ENCODE measurements at regions of chr1 and their contacts with region 1.

Region 1: DNA sequence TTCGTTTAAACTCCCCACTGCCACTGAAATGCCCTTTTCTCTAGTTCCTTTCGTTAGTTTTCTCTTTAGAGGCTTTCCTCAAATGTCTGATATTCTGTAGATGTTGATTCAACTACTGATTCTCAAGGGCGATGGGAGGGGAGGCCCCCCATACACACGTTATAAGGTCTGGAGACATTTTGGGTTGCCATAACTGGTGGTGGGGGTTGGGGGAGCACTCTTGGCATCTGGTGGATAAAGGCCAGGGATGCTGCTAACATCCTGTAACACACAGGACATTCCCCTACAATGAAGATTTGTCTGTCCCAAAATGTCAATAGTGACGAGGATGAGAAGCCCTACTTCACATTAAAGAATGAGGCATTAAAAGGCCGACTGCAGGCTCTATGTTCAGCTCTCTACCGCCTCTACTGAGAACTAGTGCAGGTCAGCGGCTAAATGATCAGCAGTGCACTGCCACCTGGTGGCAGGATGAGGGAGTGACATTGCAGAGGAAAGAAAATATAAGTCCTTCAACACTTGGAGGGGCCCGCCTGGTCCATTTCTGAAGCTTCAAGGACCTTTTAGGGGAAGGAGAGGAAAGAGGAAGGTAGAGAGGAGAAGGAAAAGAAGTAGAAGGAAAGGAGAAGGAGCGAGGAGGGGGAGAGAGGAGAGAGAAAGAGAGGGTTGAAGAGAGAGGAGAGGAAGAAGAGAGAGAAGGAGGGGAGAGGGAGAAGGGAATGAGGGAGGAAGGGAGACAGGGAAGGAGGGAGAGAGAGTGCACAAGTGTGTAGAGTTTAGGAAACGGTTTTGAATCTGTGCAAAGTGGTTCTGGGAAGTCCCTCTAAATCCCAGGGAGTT is 29.4 kb downstream of the ALG14 start:
- DNase-seq: no peak
- H3K4me3 ChIP-seq: no peak overlapping the region
- H3K27ac ChIP-seq: peak overlapping the region in 3 of 4 donors; percentile 51 to 75 (median 74)
- H3K4me1 ChIP-seq: peaks cover 0 to 47% (median 3%) of the 10 kb centered on the region in 3 donors
- H3K27me3 ChIP-seq: no peaks in the 10 kb centered on the region
- CTCF ChIP-seq: peak; percentile 90 to 99 (median 99)
- POLR2A ChIP-seq: no peak

Region 2: GRCh38 chr1:94819941-94820746 is 223.2 kb before region 1 on chr1 and contains the start of gene SLC44A3:
- intact Hi-C with region 1: loop called (anchors 10 kb)
- DNase-seq: no peak
- H3K4me3 ChIP-seq: peak within 1 kb of the TSS; percentile 73 to 82 (median 79)
- H3K27ac ChIP-seq: peak within 1 kb of the TSS; percentile 29 to 84 (median 68)
- H3K4me1 ChIP-seq: peaks cover 0 to 38% (median 5%) of the 10 kb centered on the region in 3 donors
- H3K27me3 ChIP-seq: peaks cover 0 to 18% (median 0%) of the 10 kb centered on the region in 4 donors
- CTCF ChIP-seq: peak in 2 of 6 experiments; percentile 19 to 39
- POLR2A ChIP-seq: no peak
- total RNA-seq, gene SLC44A3: 5.4 to 11.7 (median 9.4) TPM

Region 3: DNA sequence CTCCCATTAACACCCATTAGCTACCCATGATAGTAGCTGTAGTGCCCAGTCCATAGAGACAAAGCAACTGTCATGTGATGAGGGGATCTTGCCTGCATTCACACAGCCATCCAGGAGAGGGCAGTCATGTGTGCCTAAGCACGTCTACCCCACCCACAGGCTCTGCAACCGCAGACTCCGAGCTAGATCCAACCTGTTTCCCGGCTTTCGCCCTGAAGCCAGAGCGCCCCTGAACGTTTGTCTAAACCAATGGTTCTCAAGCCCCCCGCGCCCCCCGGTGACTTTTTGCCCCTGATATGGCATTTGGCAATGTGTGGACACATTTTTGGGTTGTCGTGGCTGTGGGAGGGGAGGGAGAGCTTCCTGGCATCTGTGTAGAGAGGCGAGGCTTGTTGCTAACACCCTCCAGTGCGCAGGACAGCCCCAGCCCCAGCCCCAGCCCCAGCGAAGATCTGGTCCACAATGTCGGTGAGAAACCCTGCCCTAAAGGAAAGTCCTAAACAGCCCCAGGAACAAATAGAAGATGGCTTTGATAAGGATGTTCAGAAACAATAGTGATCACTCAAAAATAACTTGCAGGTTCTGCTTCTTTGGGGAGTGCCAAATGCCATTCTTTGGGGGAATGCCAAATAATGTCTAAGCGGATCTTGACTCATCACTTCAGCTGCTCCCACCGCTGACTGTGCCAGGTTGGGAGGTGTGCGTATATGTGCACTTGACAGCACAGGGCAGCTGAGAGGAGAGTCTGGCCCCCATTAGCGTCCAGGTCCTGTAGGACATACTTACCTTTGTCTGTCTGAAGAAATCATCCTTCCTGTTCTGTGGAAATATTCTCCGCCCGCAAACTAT is 188.7 kb before region 1 on chr1:
- intact Hi-C with region 1: loop called (anchors 2 kb)
- DNase-seq: peak; percentile 45
- H3K4me3 ChIP-seq: peak overlapping the region; percentile 24 to 68 (median 46)
- H3K27ac ChIP-seq: peak overlapping the region; percentile 79 to 90 (median 87)
- H3K4me1 ChIP-seq: peaks cover 6 to 36% (median 9%) of the 10 kb centered on the region in 3 donors
- H3K27me3 ChIP-seq: no peaks in the 10 kb centered on the region
- CTCF ChIP-seq: peak; percentile 85 to 98 (median 93)
- POLR2A ChIP-seq: no peak